Heart right ventricle (tissue), 16 donors: ENCODE measurements at regions of chr22 and their contacts with region 1.

Region 1: GRCh38 chr22:36873680-36874537 is 13.1 kb downstream of the NCF4 start:
- DNase-seq: peak in 1 of 2 donors; percentile 43
- ATAC-seq: peak; percentile 71 to 90 (median 85)
- H3K4me3 ChIP-seq: no peak overlapping the region
- H3K27ac ChIP-seq: peak overlapping the region in 9 of 10 donors; percentile 3 to 87 (median 35)
- H3K4me1 ChIP-seq: peaks cover 0 to 28% (median 16%) of the 10 kb centered on the region in 9 donors
- H3K27me3 ChIP-seq: peaks cover 0 to 41% (median 27%) of the 10 kb centered on the region in 7 donors
- CTCF ChIP-seq: peak in 8 of 9 donors; percentile 23 to 63 (median 50)

Region 2: GRCh38 chr22:36977947-36978660 is 104.2 kb after region 1 on chr22:
- intact Hi-C with region 1: loop called in 1 of 10 experiments (anchors 10 kb)
- DNase-seq: peak; percentile 90 to 91
- ATAC-seq: peak; percentile 94 to 98 (median 97)
- H3K4me3 ChIP-seq: peak overlapping the region in 9 of 10 donors; percentile 24 to 57 (median 52)
- H3K27ac ChIP-seq: peak overlapping the region in 2 of 10 donors; percentile 16 to 80
- H3K4me1 ChIP-seq: peaks cover 0 to 11% (median 5%) of the 10 kb centered on the region in 9 donors
- H3K27me3 ChIP-seq: peaks cover 0 to 26% (median 11%) of the 10 kb centered on the region in 7 donors
- CTCF ChIP-seq: peak; percentile 90 to 99 (median 96)